Right lobe of liver (tissue), 6 donors: ENCODE measurements at regions of chr9 and their contacts with region 1.

Region 1: DNA sequence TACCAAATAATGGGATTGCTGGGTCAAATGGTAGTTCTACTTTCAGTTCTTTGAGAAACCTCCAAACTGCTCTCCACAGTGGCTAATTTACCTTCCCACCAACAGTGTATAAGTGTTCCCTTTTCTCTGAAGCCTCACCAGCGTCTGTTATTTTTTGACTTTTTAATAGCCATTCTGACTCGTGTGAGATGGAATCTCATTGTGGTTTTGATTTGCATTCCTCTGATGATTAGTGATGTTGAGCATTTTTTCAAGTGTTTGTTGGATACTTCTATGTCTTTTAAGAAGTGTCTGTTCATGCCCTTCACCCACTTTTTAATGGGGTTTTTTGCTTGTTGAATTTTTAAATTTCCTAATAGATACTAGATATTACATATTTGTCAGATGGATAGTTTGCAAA is 28.4 kb upstream of the SUSD1 start:
- DNase-seq: no peak
- ATAC-seq: no peak
- H3K4me3 ChIP-seq: no peak overlapping the region
- H3K27ac ChIP-seq: no peak overlapping the region
- H3K4me1 ChIP-seq: no peaks in the 10 kb centered on the region
- H3K27me3 ChIP-seq: no peaks in the 10 kb centered on the region
- CTCF ChIP-seq: no peak
- POLR2A ChIP-seq: no peak

Region 2: DNA sequence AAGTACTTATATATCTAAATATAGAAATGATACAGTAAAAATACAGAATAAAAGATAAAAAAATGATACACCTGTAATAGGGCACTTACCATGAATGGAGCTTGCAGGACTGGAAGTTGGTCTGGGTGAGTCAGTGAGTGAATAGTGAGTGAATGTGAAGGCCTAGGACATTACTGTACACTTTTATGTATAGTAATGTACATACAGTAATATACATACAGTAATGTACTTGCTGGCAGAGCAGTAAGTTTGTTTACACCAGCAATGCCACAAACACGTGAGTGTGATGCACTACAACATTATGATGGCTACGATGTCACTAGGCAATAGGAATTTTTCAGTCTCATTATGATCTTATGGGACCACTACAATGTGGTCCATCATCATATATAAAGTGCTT is 62.6 kb before region 1 on chr9:
- intact Hi-C with region 1: loop called in 1 of 2 experiments (anchors 10 kb)
- DNase-seq: no peak
- ATAC-seq: no peak
- H3K4me3 ChIP-seq: no peak overlapping the region
- H3K27ac ChIP-seq: no peak overlapping the region
- H3K4me1 ChIP-seq: no peaks in the 10 kb centered on the region
- H3K27me3 ChIP-seq: no peaks in the 10 kb centered on the region
- CTCF ChIP-seq: no peak
- POLR2A ChIP-seq: no peak

Region 3: DNA sequence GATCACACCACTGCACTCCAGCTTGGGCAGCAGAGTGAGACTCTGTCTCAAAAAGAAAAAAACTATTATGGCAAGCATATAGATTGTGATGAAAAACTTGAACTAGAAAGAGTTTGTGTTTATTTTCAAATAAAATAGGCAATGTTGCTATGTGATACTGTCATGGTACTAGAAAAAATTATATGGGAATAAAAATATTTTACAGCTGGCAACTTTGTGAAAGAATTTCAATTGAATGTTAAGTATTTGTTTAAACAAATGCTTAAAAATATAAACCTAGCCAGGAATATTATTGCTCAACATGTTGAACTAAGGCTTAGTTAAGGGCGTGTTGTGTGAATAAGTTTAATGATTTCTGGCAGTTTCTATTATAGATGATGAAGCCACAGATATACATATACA is 208.1 kb after region 1 on chr9:
- intact Hi-C with region 1: no loop called
- DNase-seq: no peak
- ATAC-seq: peak; percentile 46 to 91 (median 76)
- H3K4me3 ChIP-seq: no peak overlapping the region
- H3K27ac ChIP-seq: no peak overlapping the region
- H3K4me1 ChIP-seq: peaks cover 0 to 10% (median 3%) of the 10 kb centered on the region in 4 donors
- H3K27me3 ChIP-seq: no peaks in the 10 kb centered on the region
- CTCF ChIP-seq: no peak
- POLR2A ChIP-seq: no peak